ENCODE measurements at regions of chr9 and their contacts with region 1.

Region 1: DNA sequence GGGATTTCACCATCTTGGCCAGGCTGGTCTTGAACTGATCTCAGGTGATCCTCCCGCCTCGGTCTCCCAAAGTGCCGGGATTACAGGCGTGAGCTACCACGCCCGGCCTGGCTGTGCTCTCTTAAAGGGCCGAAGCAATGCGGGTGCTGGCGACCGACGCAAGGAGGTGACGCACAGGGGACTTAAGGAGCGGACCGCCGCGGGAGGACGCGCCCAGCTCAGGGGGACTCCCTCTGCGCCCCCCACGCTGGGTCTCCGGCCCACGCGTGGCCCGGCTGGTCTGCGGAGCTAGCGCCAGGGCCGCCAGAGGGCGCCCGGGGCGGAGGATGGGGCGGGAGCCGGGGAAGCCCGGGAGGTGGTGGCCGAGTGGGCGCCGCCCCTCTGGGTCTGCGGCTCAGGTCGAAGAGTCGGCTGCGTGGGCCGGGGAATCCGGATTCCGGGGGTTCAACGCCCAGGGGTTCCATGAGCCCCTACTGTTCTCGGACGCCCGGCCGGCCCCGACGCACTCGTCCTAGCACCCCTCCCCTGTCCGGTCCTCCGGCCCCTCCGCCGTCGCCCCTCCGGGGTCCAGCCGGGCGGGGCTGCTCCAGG is 502 bp upstream of the CERCAM start:
- H3K4me3 ChIP-seq: peak overlapping the region; percentile 75
- H3K27ac ChIP-seq: peak overlapping the region; percentile 91; the same call in 1 of the 2 replicates
- H3K4me1 ChIP-seq: peaks cover 5% of the 10 kb centered on the region
- CTCF ChIP-seq: peak; percentile 79

Region 2: GRCh38 chr9:128159784-128160602 is 260.2 kb before region 1 on chr9 and contains the start of gene BBLN:
- CTCF ChIA-PET with region 1: interaction called, 4 read pairs
- POLR2A ChIA-PET with region 1: interaction called, 10 read pairs
- H3K4me3 ChIP-seq: peak within 1 kb of the TSS; percentile 60
- H3K27ac ChIP-seq: peak within 1 kb of the TSS; percentile 78
- H3K4me1 ChIP-seq: no peaks in the 10 kb centered on the region
- CTCF ChIP-seq: no peak

Region 3: DNA sequence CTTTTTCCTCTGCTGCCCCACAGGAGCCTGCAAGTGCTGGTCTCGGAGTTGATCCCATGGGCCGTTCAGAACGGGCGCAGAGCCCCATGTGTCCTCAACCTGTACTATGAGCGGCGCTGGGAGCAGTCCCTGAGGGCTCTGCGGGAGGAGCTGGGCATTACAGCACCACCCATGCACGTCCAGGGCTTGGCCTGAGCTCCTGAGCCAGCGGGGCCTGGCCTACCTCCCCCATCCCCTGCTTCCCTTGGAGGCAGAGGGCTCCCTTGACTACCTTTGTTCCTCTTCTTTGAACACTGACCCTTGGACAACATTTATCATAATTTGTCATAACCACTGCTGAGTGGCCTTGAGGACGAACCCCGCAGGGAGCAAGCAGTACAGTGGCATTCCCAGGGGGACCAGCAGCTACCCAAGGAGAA is 86.7 kb before region 1 on chr9:
- CTCF ChIA-PET with region 1: no interaction called
- POLR2A ChIA-PET with region 1: interaction called, 13 read pairs
- H3K4me3 ChIP-seq: no peak overlapping the region
- H3K27ac ChIP-seq: no peak overlapping the region
- H3K4me1 ChIP-seq: no peaks in the 10 kb centered on the region
- CTCF ChIP-seq: no peak

Region 4: GRCh38 chr9:128349125-128349524 is 71.0 kb before region 1 on chr9:
- CTCF ChIA-PET with region 1: no interaction called
- POLR2A ChIA-PET with region 1: no interaction called
- H3K4me3 ChIP-seq: no peak overlapping the region
- H3K27ac ChIP-seq: no peak overlapping the region
- H3K4me1 ChIP-seq: no peaks in the 10 kb centered on the region
- CTCF ChIP-seq: no peak

Region 5: DNA sequence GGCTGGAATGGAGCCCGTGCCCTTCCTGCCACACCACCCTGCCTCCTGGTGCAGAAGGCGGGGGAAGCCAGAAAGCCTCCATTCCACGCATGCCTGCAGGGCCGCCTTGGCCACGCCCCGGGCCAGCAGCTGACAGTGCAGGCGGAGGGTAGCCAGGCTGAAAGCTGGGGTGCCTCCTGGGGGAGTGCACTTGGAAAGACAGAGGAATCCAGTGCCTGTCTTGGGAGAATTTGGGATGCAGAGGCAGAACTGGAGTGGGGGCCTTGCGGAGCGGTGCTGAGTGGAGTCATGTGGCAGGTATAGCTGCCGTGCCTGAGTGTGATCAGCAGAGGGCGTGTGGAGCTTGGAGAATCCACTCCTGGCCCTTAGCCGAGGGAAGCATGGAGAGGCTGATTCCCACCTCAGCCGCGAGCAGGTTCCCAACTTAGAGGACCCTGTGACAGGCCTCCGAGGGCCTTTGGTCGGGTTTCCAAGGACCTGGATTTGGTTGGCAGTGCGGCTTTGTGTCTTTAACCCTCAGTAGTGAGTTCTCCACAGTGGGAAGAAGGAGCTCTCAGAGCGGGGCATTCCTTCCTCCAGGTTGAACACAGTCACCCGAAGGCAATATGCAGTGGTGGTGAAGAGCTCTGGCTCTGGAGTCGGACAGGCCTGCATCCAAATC is 58.0 kb before region 1 on chr9:
- CTCF ChIA-PET with region 1: interaction called, 19 read pairs
- POLR2A ChIA-PET with region 1: interaction called, 6 read pairs
- H3K4me3 ChIP-seq: no peak overlapping the region
- H3K27ac ChIP-seq: no peak overlapping the region
- H3K4me1 ChIP-seq: no peaks in the 10 kb centered on the region
- CTCF ChIP-seq: peak; percentile 88

Region 6: DNA sequence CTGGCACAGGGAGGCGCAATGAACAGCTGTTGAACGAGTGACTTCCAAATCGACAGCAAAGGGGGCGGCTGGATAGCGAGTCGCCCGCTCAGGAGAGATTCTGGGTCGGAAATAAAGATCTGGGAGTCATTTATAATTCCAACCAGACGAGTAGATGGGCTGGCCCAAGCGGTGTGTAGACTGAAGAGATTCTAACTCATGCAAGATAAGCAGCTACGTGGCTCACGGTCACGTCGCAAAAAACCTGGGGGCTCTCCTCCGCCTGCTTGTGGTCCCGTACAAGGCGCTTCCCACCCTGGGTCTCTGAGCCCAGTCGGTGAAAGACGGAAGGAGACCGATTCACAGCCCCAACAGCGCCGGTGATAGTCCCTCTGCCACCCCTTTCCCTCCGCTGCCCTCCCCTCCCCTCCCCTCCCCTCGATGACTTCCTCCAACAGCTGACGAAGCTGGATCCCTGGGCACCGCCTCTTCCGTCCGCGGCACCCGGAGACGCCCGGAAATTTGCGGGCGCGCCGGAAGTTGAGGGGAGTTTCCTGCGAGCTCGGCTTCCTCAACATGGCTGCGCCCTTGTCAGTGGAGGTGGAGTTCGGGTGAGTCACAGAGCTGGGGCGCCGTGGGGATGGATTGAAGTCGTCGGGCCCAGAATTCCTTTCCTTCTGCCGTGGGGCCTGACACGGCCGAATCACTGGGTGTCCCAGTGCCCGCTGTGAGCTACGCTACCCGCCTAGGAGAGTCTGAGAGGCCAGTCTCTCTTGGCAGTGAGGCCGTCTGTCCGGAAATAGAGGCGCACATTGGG is 49.1 kb before region 1 on chr9 and contains the start of gene URM1:
- CTCF ChIA-PET with region 1: interaction called, 14 read pairs
- POLR2A ChIA-PET with region 1: interaction called, 33 read pairs
- H3K4me3 ChIP-seq: peak within 1 kb of the TSS; percentile 74
- H3K27ac ChIP-seq: peak within 1 kb of the TSS; percentile 54
- H3K4me1 ChIP-seq: 0 out of 2 replicates have a peak, but pooled peaks cover 3% of the 10 kb centered on the region
- CTCF ChIP-seq: no peak

Region 7: DNA sequence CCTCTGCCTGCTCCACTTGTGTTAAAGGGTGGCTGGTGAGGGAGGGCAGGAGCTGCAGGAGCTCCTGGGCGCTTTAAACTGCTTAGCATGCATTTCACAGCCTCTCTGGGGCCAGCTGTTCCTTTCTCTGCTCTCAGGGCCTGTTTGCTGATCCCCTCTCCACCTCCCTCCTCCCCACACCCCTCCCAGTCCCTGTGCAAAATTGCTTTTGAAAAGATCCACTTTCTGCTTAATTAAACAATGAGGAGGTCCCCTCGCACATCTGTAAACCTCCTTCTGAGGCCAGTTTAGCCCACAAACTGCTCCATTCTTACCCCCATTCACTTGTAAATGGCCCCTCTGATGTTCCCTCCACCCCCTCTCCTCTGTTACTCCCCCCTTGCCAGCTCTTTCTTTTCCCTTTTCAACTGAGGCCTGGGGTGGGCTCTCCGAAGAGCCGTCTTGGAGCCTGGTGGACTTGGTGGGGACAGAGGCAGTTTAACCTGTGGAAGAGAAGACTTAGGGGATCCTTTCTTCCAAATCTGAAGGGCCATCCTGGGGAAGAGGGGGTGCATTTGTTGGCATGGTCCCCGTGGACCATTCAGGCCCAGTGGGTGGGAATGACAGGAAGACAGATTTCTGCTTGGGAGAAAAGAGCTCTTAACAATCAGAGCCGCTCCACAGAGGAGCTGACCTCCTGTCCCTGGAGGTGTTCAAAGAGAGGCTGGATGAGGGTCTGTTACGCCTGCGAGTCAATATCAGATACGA is 37.0 kb before region 1 on chr9:
- CTCF ChIA-PET with region 1: interaction called, 10 read pairs
- POLR2A ChIA-PET with region 1: interaction called, 4 read pairs
- H3K4me3 ChIP-seq: no peak overlapping the region
- H3K27ac ChIP-seq: no peak overlapping the region
- H3K4me1 ChIP-seq: no peaks in the 10 kb centered on the region
- CTCF ChIP-seq: no peak

Region 8: DNA sequence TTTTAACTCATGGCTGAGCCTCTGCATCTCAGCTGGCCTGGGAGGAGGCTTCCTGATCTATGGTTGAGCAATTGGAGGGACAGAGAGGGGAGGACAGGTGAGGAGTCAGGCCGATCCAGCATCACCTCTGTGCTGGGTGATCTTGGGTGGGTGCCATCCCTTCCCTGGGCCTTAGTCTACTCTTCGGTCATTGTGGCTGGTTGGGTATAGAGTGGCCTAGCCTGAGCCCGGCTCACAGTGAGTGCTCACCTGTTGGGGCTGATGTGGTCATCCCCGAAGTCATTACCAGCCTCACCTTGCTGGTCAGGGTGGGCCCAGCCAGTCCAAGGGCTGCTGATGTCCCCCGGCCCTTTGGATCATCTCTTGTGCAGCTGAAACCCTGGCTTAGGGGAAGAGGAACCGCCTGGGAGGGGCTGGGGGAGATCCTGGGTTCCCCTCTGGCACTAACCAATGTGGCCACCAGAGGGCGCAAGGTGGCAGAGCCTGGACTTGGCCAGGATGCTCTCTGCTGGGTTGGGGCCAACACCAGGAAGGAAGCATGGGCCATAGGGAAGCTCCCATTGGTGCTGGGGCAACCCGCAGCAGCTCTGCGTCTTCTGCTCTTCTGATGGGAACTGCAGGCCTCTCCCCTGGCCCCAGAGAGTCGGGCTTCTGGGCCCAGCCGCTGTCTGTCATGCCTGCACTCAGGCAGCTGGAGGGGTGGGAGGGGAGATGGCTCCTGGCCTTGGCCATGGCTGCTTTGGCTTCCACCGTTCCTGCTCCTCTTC is 18.4 kb after region 1 on chr9:
- CTCF ChIA-PET with region 1: interaction called, 15 read pairs
- POLR2A ChIA-PET with region 1: interaction called, 10 read pairs
- H3K4me3 ChIP-seq: no peak overlapping the region
- H3K27ac ChIP-seq: no peak overlapping the region
- H3K4me1 ChIP-seq: no peaks in the 10 kb centered on the region
- CTCF ChIP-seq: peak; percentile 67